ENCODE measurements at regions of chr14 and their contacts with region 1.

Region 1: DNA sequence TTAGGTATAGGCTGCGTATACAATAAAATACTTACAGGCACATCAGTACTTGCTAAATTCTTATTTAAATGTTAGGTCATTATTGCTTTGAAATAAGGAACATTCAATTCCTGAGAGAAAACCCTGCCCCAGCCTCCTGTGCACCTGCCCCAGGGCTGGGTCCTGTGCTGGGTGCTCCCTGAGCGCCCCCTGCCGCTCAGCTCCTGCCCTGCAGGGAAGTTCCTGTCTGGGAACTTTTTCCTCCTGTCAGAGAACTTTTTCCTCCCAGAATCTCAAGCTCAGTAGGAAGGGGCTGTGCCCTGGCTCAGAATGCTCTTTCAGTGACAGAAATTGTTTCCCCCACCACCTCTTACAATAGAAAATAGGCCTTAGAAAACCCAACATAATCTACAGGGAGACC is 751.1 kb downstream of the TMEM121 start:
- DNase-seq: peak in 5 of 9 donors; percentile 11 to 44 (median 38)
- ATAC-seq: peak; percentile 67
- H3K4me3 ChIP-seq: no peak overlapping the region
- H3K4me3 Mint-ChIP-seq: peak overlapping the region in 2 of 10 donors; percentile 40 to 45
- H3K27ac ChIP-seq: no peak overlapping the region
- H3K27ac Mint-ChIP-seq: peak overlapping the region in 5 of 9 donors; percentile 60 to 87 (median 78)
- H3K4me1 ChIP-seq: peaks cover 7 to 22% of the 10 kb centered on the region in 2 donors
- H3K4me1 Mint-ChIP-seq: peaks cover 12 to 30% (median 22%) of the 10 kb centered on the region in 7 donors
- H3K27me3 ChIP-seq: peaks cover 0 to 5% of the 10 kb centered on the region in 2 donors
- H3K27me3 Mint-ChIP-seq: peaks cover 5 to 54% (median 25%) of the 10 kb centered on the region in 5 donors

Region 2: DNA sequence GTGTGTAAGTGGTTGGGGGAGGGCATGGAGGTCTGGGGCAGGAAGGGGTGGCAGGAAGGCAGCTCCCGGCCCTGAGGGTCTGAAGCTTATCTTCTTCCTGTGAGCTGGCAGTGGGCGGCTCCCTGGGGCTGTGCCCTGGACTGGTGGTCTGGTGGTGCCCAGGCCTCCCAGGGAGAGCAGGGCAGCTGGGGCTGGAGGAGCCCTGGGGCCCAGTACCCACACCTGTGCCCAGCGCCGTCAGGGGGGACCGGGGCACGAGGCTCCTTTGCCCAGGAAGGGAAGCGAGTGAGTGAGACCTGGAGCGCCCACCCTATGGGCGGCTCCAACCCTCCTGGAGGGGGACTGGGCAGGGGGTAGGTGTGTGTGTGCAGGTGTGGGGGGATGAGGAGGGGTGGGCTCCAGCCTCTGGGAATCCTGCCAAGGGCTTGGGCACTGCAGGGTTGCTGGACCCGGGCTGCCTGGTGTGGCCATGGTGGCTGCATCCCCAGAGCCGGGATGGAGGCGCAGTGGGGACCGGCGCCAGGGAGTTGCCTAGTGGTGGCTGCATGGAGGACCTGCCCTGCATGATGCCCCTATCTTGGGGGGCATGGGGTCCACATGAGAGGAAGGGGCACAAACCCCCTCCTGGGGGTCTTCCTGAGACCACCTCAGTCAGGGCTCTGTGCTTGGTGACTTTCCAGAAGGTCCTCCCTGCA is 397.5 kb before region 1 on chr14:
- CTCF ChIA-PET with region 1: no interaction called
- POLR2A ChIA-PET with region 1: no interaction called
- intact Hi-C with region 1: no loop called
- DNase-seq: peak in 1 of 9 donors; percentile 11
- ATAC-seq: peak; percentile 33
- H3K4me3 ChIP-seq: no peak overlapping the region
- H3K4me3 Mint-ChIP-seq: no peak overlapping the region
- H3K27ac ChIP-seq: no peak overlapping the region
- H3K27ac Mint-ChIP-seq: no peak overlapping the region
- H3K4me1 ChIP-seq: no peaks in the 10 kb centered on the region
- H3K4me1 Mint-ChIP-seq: peaks cover 0 to 4% (median 0%) of the 10 kb centered on the region in 7 donors
- H3K27me3 ChIP-seq: no peaks in the 10 kb centered on the region
- H3K27me3 Mint-ChIP-seq: peaks cover 25 to 41% (median 30%) of the 10 kb centered on the region in 5 donors

Region 3: DNA sequence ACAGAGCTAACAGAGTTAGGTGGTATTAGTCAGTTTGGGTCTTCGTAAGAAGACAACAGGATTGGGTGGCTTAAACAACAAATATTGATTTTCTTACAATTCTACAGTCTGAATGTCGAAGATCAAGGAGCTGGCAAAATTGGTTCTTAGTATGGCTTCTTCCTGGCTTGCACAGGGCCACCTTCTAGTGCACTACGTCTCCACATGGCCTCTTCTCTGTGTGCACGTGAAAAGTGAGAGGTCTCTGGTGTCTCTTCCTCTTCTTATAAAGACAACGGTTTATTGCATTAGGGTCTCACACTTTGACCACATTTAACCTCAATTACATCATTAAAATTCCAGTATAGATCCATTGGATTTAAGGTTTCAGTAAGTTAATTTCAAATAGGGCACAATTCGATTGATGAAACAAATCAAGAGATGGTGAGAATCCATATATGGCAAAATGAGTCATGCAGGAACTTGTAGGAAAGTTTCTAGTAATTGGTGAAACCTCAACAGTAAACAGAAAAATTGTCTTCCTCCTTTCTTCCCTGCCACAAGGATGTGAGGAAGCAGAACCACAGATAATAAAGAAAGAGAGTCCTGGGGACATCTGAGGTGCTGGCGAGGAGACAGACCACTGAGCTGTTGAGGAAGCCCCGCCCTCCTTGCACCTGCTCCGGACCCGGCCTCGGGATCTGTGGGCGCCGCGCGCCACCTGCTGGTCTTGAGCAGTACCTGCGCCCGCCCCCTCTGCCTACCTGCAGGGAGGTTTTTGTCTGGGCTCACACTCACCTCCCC is 95.6 kb after region 1 on chr14:
- CTCF ChIA-PET with region 1: interaction called, 3 read pairs
- POLR2A ChIA-PET with region 1: no interaction called
- intact Hi-C with region 1: loop called in 1 of 2 experiments (anchors 5 kb)
- DNase-seq: peak; percentile 59 to 78 (median 75)
- ATAC-seq: peak; percentile 92
- H3K4me3 ChIP-seq: no peak overlapping the region
- H3K4me3 Mint-ChIP-seq: peak overlapping the region in 9 of 10 donors; percentile 40 to 70 (median 60)
- H3K27ac ChIP-seq: no peak overlapping the region
- H3K27ac Mint-ChIP-seq: peak overlapping the region; percentile 12 to 78 (median 36)
- H3K4me1 ChIP-seq: peaks cover 0 to 8% of the 10 kb centered on the region in 2 donors
- H3K4me1 Mint-ChIP-seq: peaks cover 9 to 25% (median 21%) of the 10 kb centered on the region in 7 donors
- H3K27me3 ChIP-seq: no peaks in the 10 kb centered on the region
- H3K27me3 Mint-ChIP-seq: peaks cover 0 to 13% (median 4%) of the 10 kb centered on the region in 5 donors

Measured in naive thymus-derived CD4-positive, alpha-beta T cell (primary cell).